AG04450 (cell line): ENCODE measurements at regions of chr7 and their contacts with region 1.

Region 1: GRCh38 chr7:47962262-47962661 is 14.0 kb upstream of the PKD1L1 start:
- DNase-seq: no peak
- H3K4me3 ChIP-seq: no peak overlapping the region
- H3K27ac ChIP-seq: no peak overlapping the region
- H3K27me3 ChIP-seq: no peaks in the 10 kb centered on the region
- CTCF ChIP-seq: no peak

Region 2: GRCh38 chr7:47945261-47946001 is 16.8 kb before region 1 on chr7:
- CTCF ChIA-PET with region 1: interaction called, 76 read pairs
- POLR2A ChIA-PET with region 1: interaction called, 6 read pairs
- DNase-seq: no peak
- H3K4me3 ChIP-seq: no peak overlapping the region
- H3K27ac ChIP-seq: no peak overlapping the region
- H3K27me3 ChIP-seq: no peaks in the 10 kb centered on the region
- CTCF ChIP-seq: peak; percentile 75

Region 3: DNA sequence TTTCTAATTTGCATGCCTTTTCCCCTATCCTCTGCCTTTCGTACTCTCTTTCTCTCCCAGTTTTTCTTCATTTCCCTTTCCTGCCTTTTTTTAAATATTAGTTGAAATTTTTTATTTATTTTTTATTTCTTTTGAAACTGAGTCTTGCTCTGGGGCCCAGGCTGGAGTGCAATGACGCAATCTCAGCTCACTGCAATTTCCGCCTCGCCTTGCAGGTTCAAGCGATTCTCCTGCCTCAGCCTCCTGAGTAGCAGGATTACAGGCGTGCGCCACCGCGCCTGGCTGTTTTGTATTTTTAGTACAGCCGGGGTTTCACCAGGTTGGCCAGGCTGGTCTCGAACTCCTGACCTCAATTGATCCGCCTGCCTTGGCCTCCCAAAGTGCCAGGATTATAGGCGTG is 37.2 kb after region 1 on chr7:
- CTCF ChIA-PET with region 1: no interaction called
- POLR2A ChIA-PET with region 1: no interaction called
- DNase-seq: no peak
- H3K4me3 ChIP-seq: no peak overlapping the region
- H3K27ac ChIP-seq: no peak overlapping the region
- H3K27me3 ChIP-seq: no peaks in the 10 kb centered on the region
- CTCF ChIP-seq: no peak

Region 4: DNA sequence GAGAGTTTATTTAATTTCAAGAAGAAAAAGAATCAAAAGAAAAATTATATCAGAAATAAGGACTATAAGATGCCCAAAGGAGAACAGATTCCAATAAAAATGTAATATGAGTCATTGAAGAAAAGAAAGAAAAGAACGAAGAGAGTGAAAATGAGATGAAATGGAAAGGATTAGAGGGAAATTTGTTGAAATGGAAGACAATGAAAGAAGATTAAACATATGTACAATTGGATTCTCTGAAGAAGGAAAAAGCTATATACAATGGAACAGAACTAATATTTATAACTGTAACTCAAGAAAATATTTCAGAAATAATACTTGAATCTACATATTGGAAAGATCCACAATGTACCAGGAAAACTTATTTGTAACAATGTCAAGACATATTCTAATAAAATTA is 101.7 kb after region 1 on chr7:
- CTCF ChIA-PET with region 1: no interaction called
- POLR2A ChIA-PET with region 1: no interaction called
- DNase-seq: no peak
- H3K4me3 ChIP-seq: no peak overlapping the region
- H3K27ac ChIP-seq: no peak overlapping the region
- H3K27me3 ChIP-seq: no peaks in the 10 kb centered on the region
- CTCF ChIP-seq: no peak